Aorta (tissue), 5 donors: ENCODE measurements at regions of chr5 and their contacts with region 1.

Region 1: DNA sequence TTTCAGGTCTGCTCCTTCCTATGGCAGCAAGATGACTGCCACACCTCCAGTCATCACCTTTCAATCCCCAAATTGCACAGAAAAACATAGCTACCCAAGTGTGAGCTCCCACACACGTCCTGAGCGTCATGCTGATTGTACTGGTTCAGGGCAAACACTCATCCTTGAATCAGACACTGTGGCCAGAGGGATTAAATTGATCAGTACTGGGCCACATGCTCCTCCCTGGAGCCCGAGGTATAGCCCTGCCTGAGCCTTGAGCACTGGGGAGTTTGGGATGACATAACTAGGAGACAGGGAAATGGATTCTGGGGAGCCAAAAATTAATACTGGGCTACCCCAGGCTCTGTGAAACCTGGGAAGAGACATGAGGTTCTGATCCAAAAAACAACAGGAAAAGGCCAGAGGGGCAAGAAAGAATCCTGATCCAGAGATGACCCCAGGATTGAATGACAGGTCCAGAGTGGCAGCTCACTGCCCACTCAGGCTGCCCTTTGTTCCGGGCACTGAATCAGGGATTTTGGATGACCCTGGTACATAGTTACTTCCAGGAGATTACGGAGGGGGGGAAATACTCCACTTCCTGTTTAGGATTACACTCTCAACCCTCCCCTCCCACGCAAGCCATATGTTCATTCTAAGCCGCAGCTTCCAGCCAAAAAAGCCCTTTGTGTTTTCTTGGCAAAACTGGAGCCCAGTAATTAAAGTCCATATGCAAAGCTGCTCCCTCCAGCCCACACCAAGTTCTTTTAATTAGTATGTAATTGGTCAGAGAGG is 141.6 kb upstream of the SPRY4 start:
- DNase-seq: no peak
- ATAC-seq: no peak
- H3K4me3 ChIP-seq: no peak overlapping the region
- H3K27ac ChIP-seq: no peak overlapping the region
- H3K4me1 ChIP-seq: no peaks in the 10 kb centered on the region
- H3K27me3 ChIP-seq: no peaks in the 10 kb centered on the region

Region 2: GRCh38 chr5:142403571-142403971 is 62.8 kb before region 1 on chr5:
- intact Hi-C with region 1: no loop called
- DNase-seq: no peak
- ATAC-seq: no peak
- H3K4me3 ChIP-seq: no peak overlapping the region
- H3K27ac ChIP-seq: peak overlapping the region in 1 of 2 donors; percentile 6
- H3K4me1 ChIP-seq: no peaks in the 10 kb centered on the region
- H3K27me3 ChIP-seq: no peaks in the 10 kb centered on the region

Region 3: GRCh38 chr5:142529626-142530278 is 63.4 kb after region 1 on chr5:
- intact Hi-C with region 1: loop called in 1 of 2 experiments (anchors 10 kb)
- DNase-seq: no peak
- ATAC-seq: no peak
- H3K4me3 ChIP-seq: no peak overlapping the region
- H3K27ac ChIP-seq: no peak overlapping the region
- H3K4me1 ChIP-seq: no peaks in the 10 kb centered on the region
- H3K27me3 ChIP-seq: no peaks in the 10 kb centered on the region